ENCODE measurements at regions of chr20 and their contacts with region 1.

Region 1: GRCh38 chr20:38893565-38894090 is 32.6 kb upstream of the FAM83D start:
- DNase-seq: peak; percentile 82
- ATAC-seq: peak; percentile 93
- H3K4me3 Mint-ChIP-seq: peak overlapping the region; percentile 3
- H3K27ac Mint-ChIP-seq: peak overlapping the region; percentile 73
- H3K4me1 Mint-ChIP-seq: peaks cover 46% of the 10 kb centered on the region
- H3K27me3 Mint-ChIP-seq: no peaks in the 10 kb centered on the region

Region 2: GRCh38 chr20:38748097-38748860 is 145.3 kb before region 1 on chr20 and contains the start of gene ACTR5:
- CTCF ChIA-PET with region 1: interaction called, 23 read pairs
- POLR2A ChIA-PET with region 1: no interaction called
- DNase-seq: peak; percentile 97
- ATAC-seq: peak; percentile 92
- H3K4me3 Mint-ChIP-seq: peak within 1 kb of the TSS; percentile 93
- H3K27ac Mint-ChIP-seq: peak within 1 kb of the TSS; percentile 97
- H3K4me1 Mint-ChIP-seq: peaks cover 29% of the 10 kb centered on the region
- H3K27me3 Mint-ChIP-seq: peaks cover 5% of the 10 kb centered on the region
- total RNA-seq, gene ACTR5: 8.4 to 9.2 TPM

Region 3: DNA sequence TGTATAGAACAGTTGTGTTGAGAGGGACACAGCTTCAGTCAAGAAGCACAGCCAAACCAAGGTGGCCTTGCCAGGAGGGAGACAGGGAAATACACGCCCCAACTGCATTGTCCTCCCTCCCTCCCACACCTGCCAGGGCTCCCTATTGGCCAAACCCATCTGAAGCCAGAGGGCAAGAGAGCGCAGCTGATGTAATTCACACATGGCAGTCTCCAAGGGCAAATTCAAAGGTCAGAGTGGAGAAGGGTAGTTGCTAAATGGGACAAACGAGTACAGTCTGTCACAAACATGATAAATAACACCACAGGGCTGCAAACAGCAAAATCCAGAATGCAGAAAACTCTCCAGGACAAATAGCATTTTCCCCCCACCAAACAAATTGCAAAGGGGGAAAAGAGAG is 111.4 kb before region 1 on chr20:
- CTCF ChIA-PET with region 1: no interaction called
- POLR2A ChIA-PET with region 1: no interaction called
- DNase-seq: no peak
- ATAC-seq: no peak
- H3K4me3 Mint-ChIP-seq: no peak overlapping the region
- H3K27ac Mint-ChIP-seq: no peak overlapping the region
- H3K4me1 Mint-ChIP-seq: no peaks in the 10 kb centered on the region
- H3K27me3 Mint-ChIP-seq: no peaks in the 10 kb centered on the region

Region 4: DNA sequence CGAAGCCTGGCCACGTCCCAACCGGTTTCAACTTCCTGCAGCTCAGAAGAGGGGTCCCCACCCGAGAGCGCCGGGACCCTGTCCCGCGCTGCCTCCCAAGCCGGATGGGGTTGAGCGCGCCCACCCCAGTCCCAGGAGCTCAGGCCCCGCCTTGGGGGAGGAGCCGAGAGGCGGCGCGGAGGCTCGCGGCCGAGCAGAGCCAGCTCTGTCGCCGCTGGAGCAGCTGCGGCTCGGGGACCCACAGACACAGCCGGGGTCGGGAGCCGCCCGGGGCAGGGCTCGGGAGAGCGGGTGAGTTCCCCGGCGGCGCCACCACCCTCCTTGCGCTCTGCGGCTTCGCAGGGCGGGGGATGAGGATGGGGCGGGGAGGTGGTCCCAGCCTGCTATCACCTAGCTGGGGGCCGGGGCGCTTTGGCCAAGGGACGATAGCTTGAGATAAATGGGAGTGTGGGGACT is 88.1 kb before region 1 on chr20 and contains the start of gene PPP1R16B:
- CTCF ChIA-PET with region 1: interaction called, 36 read pairs
- POLR2A ChIA-PET with region 1: interaction called, 36 read pairs
- DNase-seq: peak; percentile 91
- ATAC-seq: peak; percentile 83
- H3K4me3 Mint-ChIP-seq: peak within 1 kb of the TSS; percentile 88
- H3K27ac Mint-ChIP-seq: peak within 1 kb of the TSS; percentile 99
- H3K4me1 Mint-ChIP-seq: peaks cover 67% of the 10 kb centered on the region
- H3K27me3 Mint-ChIP-seq: no peaks in the 10 kb centered on the region
- total RNA-seq, gene PPP1R16B: 63.4 to 65.1 TPM

Region 5: DNA sequence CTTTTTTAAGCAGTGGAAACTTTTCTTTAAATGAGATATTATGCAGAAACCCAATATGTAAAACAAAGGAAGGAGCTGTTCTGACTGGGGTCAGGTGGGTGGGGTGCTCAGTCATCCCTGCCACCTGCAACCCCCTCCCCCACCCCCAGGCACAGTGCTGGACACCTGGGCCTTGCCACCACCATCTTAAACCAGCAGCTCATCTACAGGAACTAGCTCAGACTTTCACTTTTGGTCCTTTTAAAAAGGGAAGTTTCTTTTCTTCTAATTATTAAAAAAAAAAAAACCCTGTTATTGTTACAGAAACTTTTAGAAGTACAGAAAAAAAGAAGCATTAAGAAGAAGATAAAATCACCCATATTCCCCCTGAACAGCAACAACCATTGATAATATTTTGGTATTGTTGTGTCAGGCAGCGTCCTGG is 51.1 kb before region 1 on chr20:
- CTCF ChIA-PET with region 1: interaction called, 21 read pairs
- POLR2A ChIA-PET with region 1: interaction called, 4 read pairs
- DNase-seq: peak; percentile 58
- ATAC-seq: peak; percentile 56
- H3K4me3 Mint-ChIP-seq: peak overlapping the region; percentile 64
- H3K27ac Mint-ChIP-seq: peak overlapping the region; percentile 77
- H3K4me1 Mint-ChIP-seq: peaks cover 74% of the 10 kb centered on the region
- H3K27me3 Mint-ChIP-seq: no peaks in the 10 kb centered on the region

Region 6: DNA sequence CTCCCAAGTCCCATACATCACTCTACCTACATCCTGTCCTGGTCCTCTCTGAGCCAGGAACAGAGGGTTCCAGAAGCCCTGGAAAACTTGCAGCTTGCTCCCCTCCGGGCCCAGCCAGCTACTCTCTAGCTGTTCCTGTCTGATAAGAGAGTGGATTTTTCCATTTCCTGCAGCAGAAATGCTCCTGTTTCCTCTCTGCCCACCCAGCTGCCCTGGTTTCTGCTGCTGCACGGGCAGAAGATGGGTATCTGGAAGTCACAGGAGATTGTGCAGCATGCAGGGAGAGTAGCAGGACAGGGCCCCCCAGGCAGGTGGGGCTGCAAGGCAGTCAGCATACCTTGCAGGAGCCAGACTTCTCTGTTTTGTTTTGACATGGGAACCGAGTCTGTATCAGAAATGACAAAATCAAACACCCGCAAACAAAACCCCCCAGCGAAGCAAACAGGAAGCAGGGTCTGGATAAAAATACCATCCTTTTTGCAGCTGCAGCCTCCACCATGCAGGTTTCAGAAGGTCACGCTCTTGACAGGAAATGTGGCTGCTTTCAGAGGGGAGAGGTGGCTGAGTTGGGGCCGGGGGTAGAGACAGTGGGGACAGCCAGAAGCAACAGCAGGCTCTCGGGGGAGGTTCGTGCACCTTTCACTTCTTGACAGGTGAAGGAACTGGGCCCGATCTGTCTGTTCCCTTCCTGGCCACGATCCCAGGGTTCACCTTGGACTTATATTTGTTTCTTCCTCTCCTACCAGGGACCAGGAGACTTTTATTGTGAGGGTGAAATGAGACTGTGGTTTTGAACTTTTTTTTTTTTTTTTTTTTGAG is 18.2 kb before region 1 on chr20:
- CTCF ChIA-PET with region 1: interaction called, 54 read pairs
- POLR2A ChIA-PET with region 1: interaction called, 13 read pairs
- DNase-seq: peak; percentile 80
- ATAC-seq: peak; percentile 53
- H3K4me3 Mint-ChIP-seq: peak overlapping the region; percentile 80
- H3K27ac Mint-ChIP-seq: peak overlapping the region; percentile 89
- H3K4me1 Mint-ChIP-seq: peaks cover 91% of the 10 kb centered on the region
- H3K27me3 Mint-ChIP-seq: no peaks in the 10 kb centered on the region

Region 7: GRCh38 chr20:38907918-38908677 is 14.5 kb after region 1 on chr20:
- CTCF ChIA-PET with region 1: interaction called, 11 read pairs
- POLR2A ChIA-PET with region 1: interaction called, 3 read pairs
- DNase-seq: no peak
- ATAC-seq: no peak
- H3K4me3 Mint-ChIP-seq: no peak overlapping the region
- H3K27ac Mint-ChIP-seq: no peak overlapping the region
- H3K4me1 Mint-ChIP-seq: no peaks in the 10 kb centered on the region
- H3K27me3 Mint-ChIP-seq: no peaks in the 10 kb centered on the region